ENCODE measurements at regions of chr6 and their contacts with region 1.

Region 1: DNA sequence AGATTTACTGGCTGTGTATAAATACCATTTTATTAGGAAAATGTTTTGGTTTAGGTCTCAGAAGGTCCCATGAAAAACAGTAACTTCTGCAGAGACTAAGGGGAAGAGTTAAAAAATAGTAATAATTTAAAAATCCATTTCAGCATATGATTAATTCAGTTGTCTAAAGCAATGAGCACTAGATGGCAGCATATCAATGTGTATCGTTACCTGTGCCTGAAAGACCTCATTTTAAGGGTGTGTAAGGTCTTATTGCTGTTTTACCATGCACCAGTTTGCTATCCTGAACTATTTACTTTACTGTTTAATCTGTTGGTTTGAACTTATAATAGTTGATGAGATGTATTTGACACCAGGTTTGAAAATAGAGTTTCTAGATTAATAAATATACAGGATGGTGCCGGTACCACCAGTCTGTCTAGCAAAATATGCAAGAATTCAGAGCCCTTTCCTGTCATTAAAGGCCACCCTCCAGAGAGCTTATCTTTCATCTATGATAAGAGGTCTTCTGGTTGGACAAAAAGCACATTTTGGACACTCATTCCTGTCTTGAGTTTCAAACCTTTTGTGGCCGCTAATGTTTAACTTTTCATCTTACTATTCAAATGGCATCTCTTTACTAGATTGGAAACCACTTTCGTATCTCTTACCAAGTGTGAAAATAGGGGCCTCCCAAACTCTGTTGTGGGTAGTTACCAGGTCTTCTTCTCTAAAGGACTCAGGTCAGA is 8.9 kb upstream of the AHI1 start:
- DNase-seq: peak; percentile 25
- H3K4me3 ChIP-seq: no peak overlapping the region
- H3K27ac ChIP-seq: no peak overlapping the region
- H3K4me1 ChIP-seq: peaks cover 0 to 6% of the 10 kb centered on the region in 2 experiments; a peak in 2 of 4 replicates
- H3K27me3 ChIP-seq: no peaks in the 10 kb centered on the region
- CTCF ChIP-seq: peak; percentile 70
- EP300 ChIP-seq: no peak
- RAD21 ChIP-seq: peak; percentile 83

Region 2: DNA sequence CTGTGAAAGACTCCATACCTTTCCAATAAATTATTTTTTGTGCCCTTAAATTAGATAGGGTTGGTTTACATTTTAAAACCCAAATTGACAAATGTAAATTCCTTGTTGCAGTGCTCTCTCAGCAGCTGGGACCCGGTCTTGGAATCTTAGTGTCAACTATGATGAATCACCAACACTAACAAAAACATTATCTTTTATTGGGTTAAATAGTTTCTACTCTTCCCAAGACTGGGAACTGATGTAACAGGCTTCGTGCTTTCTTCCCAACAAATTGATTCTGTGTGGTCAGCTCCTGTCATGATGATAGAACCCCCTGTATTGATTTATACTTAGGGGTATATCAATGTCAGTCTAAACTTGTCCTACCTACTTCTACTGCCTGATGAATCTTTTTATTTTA is 14.3 kb after region 1 on chr6:
- CTCF ChIA-PET with region 1: interaction called, 11 read pairs
- POLR2A ChIA-PET with region 1: no interaction called
- DNase-seq: no peak
- H3K4me3 ChIP-seq: no peak overlapping the region
- H3K27ac ChIP-seq: no peak overlapping the region
- H3K4me1 ChIP-seq: no peaks in the 10 kb centered on the region
- H3K27me3 ChIP-seq: no peaks in the 10 kb centered on the region
- CTCF ChIP-seq: no peak
- EP300 ChIP-seq: no peak
- RAD21 ChIP-seq: no peak